ENCODE measurements at regions of chr12 and their contacts with region 1.

Region 1: DNA sequence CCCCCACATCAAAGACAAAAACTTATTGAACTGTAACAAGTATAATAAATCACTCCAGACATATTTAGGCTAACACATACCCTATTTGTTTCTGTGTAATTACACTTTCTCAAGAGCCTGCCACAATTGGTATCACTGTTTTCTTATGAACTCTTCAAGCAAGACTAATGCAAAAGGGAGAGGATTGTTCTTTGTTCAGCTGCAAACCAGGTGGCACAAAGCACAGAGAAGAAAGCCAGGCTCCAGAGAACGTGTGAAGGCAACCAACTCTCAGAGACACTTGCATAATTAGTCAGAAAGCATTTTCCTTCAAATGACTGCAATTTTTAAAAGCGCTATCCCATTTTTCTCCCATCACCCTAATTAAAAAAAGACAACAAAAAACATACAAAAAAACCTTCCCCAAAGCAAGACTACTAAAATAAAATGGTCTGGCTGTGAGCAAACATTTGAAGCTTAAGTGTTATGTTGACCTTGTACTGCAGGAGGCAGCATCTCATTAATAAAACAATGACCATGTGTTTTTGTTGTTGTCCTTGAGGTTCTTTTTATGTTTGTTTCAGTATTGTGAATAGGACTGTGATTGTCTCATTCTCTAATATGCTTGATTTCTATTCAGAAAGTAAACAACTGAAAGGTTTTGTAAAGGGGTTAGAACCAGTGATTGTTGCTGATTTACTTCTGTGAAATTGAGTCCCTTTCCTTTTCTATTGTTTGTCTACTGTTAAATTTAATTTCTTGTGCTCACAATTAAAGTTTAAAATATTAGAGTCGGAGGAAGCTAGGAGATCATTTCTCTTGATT is 452.7 kb upstream of the PDE3A start:
- H3K4me3 Mint-ChIP-seq: no peak overlapping the region
- H3K27ac Mint-ChIP-seq: no peak overlapping the region
- H3K4me1 Mint-ChIP-seq: peaks cover 12% of the 10 kb centered on the region
- H3K27me3 Mint-ChIP-seq: no peaks in the 10 kb centered on the region

Region 2: GRCh38 chr12:19757317-19757877 is 158.2 kb before region 1 on chr12:
- intact Hi-C with region 1: loop called (anchors 10 kb)
- H3K4me3 Mint-ChIP-seq: no peak overlapping the region
- H3K27ac Mint-ChIP-seq: no peak overlapping the region
- H3K4me1 Mint-ChIP-seq: peaks cover 19% of the 10 kb centered on the region
- H3K27me3 Mint-ChIP-seq: no peaks in the 10 kb centered on the region

Region 3: DNA sequence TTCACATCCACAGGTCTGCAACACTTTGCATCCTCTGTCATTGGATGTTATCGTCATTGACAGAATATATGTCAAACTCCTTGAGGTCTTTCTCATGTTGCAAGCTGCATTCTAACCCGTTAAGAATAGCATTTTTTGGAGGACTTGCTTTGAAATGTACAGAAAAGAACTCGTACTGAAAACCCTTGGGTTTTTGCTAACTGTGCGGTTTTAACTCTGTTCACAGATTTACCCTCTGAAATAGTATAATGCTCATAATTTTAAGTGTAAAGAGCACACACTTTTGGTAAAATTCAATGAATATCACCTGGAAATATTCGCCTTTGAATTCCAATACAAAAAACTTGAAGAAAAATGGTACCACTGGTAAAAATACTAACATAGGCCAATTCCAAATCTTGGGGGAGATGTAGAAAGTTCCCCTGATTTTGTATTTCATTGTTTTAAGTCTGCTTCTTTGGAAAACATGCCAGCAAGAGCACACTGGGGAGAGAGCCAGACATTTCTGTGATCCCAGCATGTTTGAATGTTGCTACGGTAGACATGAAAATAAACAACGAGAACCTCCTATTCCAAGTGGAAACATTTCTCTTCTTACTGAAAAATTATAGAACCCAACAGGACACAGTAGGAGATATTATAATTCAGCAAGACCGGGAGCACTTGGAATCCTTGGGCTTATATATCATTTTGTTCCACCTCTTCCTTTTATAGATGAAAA is 30.3 kb before region 1 on chr12:
- intact Hi-C with region 1: no loop called
- H3K4me3 Mint-ChIP-seq: no peak overlapping the region
- H3K27ac Mint-ChIP-seq: no peak overlapping the region
- H3K4me1 Mint-ChIP-seq: peaks cover 8% of the 10 kb centered on the region
- H3K27me3 Mint-ChIP-seq: no peaks in the 10 kb centered on the region

Region 4: GRCh38 chr12:20220339-20220738 is 304.7 kb after region 1 on chr12:
- intact Hi-C with region 1: loop called (anchors 2 kb)
- H3K4me3 Mint-ChIP-seq: no peak overlapping the region
- H3K27ac Mint-ChIP-seq: no peak overlapping the region
- H3K4me1 Mint-ChIP-seq: no peaks in the 10 kb centered on the region
- H3K27me3 Mint-ChIP-seq: peaks cover 1% of the 10 kb centered on the region

Region 5: GRCh38 chr12:20369305-20370005 is 453.9 kb after region 1 on chr12:
- intact Hi-C with region 1: loop called (anchors 10 kb)
- H3K4me3 Mint-ChIP-seq: peak overlapping the region; percentile 88
- H3K27ac Mint-ChIP-seq: no peak overlapping the region
- H3K4me1 Mint-ChIP-seq: peaks cover 27% of the 10 kb centered on the region
- H3K27me3 Mint-ChIP-seq: peaks cover 67% of the 10 kb centered on the region

Region 6: GRCh38 chr12:21169878-21170472 is 1254.4 kb after region 1 on chr12:
- intact Hi-C with region 1: loop called (anchors 5 kb)
- H3K4me3 Mint-ChIP-seq: no peak overlapping the region
- H3K27ac Mint-ChIP-seq: no peak overlapping the region
- H3K4me1 Mint-ChIP-seq: no peaks in the 10 kb centered on the region
- H3K27me3 Mint-ChIP-seq: no peaks in the 10 kb centered on the region

Measured in dendritic cell treated with granulocyte-macrophage colony-stimulating factor and Interleukin-4, amounts not matched to agents 40 ng/mL and 50 ng/mL, for 4 days (primary cell).